Sciatic nerve (tissue), 2 donors: ENCODE measurements at regions of chr20 and their contacts with region 1.

Region 1: DNA sequence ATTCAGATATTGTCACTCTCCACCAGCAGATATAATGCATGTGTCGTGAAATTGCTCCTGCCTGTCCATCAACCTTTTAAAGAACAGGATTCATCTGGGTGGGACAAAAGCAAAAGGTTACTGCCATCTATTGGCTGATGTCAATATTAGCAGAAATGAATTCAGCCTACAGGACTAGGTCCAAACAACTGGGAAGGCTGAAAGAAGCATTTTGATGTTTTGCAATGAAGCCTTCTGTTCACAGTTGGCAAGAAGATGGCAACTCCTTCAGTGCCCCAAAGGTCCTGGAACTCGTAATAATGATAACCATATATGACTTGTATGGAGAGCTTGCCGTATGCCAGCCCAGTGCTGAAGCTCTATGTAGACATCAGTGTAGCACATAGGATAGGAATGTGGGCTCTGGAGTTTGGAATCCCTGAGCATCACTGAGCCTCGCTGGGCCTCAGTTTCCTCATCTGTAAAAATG is 7.5 kb downstream of the BCAS1 start:
- DNase-seq: no peak
- ATAC-seq: peak; percentile 74

Region 2: GRCh38 chr20:53939572-53940359 is 123.1 kb before region 1 on chr20:
- intact Hi-C with region 1: loop called (anchors 10 kb)
- DNase-seq: peak; percentile 96
- ATAC-seq: peak; percentile 94